ENCODE measurements at regions of chr3 and their contacts with region 1.

Region 1: DNA sequence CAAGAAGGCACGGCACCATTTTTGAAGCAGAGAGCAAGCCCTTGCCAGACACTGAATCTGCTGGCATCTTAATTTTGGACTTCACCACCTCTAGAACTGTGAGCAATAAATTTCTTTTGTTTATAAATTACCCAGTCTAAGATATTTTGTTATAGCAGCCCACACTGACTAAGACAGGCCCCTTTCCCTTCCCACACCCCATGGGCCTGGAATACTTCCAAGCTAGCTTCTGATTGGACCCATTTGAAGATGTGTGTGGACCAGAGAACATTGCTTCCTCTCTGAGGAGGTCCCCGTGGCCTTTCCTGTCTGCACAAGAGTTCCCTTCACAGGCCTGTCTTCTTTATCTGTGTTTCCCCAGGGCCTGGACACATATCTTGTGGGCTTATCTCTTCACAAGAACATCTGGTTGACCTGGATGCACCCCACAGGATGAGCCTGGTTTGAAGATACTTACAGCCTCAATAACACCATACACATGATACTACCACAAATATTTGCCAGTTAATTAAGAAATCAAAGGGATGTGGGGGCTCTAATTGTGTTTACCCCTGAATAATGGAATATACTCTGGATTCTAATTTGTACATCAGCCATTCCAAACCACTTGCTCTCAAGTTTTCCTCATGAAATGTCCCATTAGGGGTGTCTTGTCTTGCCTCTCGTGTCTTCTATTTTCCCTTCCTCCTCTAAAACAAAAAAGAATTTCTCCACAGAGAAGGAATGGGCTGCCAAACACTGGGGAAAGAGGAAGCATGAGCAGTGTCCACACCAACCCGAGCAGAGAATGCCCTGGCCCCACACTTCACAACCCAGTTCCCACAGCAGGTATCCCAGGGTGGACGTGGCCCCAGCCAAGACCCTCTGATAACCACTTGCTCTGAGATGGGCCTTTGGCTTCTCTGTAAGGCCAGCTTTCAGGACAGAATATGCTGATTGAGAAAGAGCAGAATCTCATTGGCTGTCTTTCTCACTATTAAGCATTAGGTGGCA is 42.5 kb downstream of the GLB1 start:
- DNase-seq: no peak
- H3K4me3 ChIP-seq: no peak overlapping the region
- H3K27ac ChIP-seq: no peak overlapping the region
- H3K4me1 ChIP-seq: no peaks in the 10 kb centered on the region
- H3K27me3 ChIP-seq: no peaks in the 10 kb centered on the region
- CTCF ChIP-seq: no peak

Region 2: DNA sequence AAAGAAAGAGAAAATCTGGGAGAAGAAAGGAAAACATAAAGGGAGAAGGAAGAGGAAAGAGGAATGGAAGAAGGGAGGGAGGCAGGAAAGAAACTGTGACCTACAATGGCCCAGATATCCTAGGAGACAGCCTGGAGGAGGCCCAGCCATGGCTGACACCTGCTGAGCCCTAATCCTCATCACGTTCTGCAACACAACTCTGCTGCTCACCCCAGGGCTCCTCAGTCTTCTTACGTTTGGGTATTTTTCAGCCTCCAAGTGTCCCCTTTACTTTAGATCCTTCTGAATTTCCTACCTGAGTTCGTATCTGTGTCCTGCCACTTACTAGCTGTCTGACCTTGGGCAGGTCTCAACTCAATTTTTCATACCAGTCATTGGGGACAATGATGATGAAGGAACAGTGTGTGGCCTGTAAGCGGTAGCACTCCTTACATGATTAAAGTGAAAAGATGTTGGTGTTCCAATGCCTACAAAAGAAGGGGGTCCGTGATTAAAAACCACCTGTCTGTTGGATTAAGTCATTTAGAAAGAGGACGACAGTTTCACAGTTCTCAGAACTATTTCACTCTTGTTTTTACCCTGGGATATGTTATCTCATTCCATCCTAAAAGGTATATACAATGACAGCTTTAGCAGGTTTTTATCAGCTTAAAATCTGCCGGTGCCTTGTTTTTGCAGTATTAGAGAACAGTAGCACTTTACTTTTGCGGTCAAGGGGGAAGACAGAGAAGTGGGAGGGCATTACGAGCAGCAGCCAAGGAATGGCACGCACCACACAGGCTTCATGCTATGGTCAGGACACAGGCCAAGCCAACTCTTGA is 55.6 kb before region 1 on chr3:
- CTCF ChIA-PET with region 1: no interaction called
- dilution Hi-C with region 1: loop called (anchors 5 kb)
- in situ Hi-C with region 1: no loop called
- intact Hi-C with region 1: no loop called
- DNase-seq: no peak
- H3K4me3 ChIP-seq: no peak overlapping the region
- H3K27ac ChIP-seq: no peak overlapping the region
- H3K4me1 ChIP-seq: peaks cover 6% of the 10 kb centered on the region
- H3K27me3 ChIP-seq: no peaks in the 10 kb centered on the region
- CTCF ChIP-seq: no peak